Mucosa of descending colon (tissue), 3 donors: ENCODE measurements at regions of chr15 and their contacts with region 1.

Region 1: DNA sequence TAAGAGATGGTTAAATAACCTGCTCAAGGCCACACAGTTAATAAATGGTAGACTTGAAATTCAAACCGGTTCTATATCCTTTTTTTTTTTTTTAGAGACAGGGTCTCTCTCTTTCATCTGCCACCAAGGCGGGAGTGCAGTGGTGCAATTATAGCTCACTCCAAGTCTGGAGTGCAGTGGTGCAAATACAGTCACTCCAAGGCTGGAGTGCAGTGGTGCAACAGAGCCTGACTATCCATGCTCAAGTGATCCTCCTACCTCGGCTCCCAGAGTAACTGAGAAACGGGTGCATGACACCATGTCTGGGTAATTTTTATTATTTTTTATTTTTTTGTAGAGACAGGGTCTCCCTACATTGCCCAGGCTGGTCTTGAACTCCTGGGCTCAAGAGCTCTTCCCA is 23.4 kb downstream of the DPP8 start:
- DNase-seq: no peak
- ATAC-seq: no peak
- H3K4me3 ChIP-seq: no peak overlapping the region
- H3K4me1 ChIP-seq: no peaks in the 10 kb centered on the region
- CTCF ChIP-seq: no peak

Region 2: DNA sequence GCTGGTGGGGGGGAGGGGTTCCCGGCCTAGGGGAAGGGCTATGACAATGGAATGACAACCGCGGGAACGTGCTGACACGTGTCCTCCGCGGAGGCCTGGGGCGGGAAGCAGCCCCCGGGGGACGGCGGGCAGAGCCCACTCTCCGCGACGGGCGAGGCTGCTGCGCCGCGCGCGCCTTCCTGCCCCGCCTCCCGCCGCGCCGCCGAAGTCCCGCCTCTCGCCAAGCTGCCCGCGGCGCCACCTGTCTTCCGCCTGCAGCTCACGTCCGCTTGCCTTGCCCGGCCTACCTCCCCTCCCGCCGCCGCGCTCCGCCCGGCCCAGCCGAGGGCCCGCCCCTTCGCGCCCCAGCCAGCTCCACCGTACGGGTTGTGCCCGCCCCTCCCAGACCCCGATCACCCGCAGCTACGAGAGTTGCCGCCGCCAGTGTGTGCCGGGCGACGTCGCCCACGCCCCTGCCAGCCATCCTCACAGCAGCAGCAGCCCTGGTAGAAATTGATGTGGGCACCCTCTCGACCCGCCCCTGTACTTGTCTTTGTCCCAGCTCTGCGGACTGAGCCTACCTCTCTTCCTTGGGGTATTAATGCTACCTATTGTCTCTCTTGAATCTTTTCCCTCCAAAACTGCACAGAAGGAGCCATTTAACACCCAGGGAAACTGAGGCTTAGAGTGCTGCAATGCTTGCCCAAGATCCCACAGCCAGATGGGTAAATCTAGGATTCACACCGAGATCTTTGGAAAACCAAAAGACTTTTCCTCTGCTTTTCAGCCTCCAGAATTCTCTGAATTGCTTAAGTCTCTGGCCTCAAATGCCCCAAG is 207.2 kb before region 1 on chr15 and contains the start of gene PARP16:
- intact Hi-C with region 1: no loop called
- DNase-seq: peak; percentile 92 to 97 (median 97)
- ATAC-seq: peak; percentile 98
- H3K4me3 ChIP-seq: peak within 1 kb of the TSS; percentile 61
- H3K4me1 ChIP-seq: peaks cover 10% of the 10 kb centered on the region
- CTCF ChIP-seq: peak; percentile 73
- total RNA-seq, gene PARP16: 9.6 to 12.4 (median 12.1) TPM

Region 3: GRCh38 chr15:65450556-65450955 is 43.5 kb before region 1 on chr15:
- intact Hi-C with region 1: loop called in 1 of 2 experiments (anchors 2 kb)
- DNase-seq: no peak
- ATAC-seq: no peak
- H3K4me3 ChIP-seq: no peak overlapping the region
- H3K4me1 ChIP-seq: no peaks in the 10 kb centered on the region
- CTCF ChIP-seq: no peak

Region 4: GRCh38 chr15:65595960-65596359 is 101.9 kb after region 1 on chr15:
- intact Hi-C with region 1: no loop called
- DNase-seq: no peak
- ATAC-seq: no peak
- H3K4me3 ChIP-seq: no peak overlapping the region
- H3K4me1 ChIP-seq: no peaks in the 10 kb centered on the region
- CTCF ChIP-seq: no peak

Region 5: DNA sequence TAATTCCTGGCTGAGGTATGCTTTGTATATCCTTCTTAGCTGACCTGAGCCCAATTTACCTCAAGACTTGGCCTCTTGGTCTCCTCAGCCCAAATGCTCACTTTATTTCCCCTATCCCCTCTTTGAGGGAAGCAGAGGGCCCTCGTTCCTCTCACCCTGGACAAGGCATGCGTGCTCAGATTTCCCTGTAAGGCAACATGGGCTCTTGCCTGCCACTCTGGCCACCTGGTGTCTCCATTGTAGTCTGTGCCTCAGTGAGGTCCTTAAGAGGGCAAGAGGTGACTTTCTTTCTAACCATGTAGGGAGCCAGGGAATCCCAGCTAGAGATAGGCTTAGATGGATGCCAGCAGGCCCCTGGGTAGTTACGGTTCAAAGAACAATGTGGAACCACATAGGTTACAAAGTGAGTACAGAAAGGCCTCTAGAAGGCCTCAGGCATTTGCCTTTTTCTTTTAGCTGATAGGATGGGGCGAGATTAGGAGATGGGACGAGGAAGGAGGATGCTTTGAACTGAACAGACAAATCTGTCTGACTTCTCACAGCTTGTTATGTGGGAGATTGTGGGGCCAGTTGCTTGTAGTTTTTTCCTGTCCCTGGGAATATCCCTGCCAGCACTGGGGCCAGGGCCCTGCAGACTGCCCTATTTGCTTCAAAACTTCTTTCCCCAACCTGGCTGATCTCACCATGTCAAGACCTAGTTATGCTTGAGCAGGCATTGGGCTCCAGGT is 118.0 kb after region 1 on chr15:
- intact Hi-C with region 1: no loop called
- DNase-seq: no peak
- ATAC-seq: no peak
- H3K4me3 ChIP-seq: no peak overlapping the region
- H3K4me1 ChIP-seq: peaks cover 18% of the 10 kb centered on the region
- CTCF ChIP-seq: no peak